ENCODE measurements at regions of chr14 and their contacts with region 1.

Region 1: DNA sequence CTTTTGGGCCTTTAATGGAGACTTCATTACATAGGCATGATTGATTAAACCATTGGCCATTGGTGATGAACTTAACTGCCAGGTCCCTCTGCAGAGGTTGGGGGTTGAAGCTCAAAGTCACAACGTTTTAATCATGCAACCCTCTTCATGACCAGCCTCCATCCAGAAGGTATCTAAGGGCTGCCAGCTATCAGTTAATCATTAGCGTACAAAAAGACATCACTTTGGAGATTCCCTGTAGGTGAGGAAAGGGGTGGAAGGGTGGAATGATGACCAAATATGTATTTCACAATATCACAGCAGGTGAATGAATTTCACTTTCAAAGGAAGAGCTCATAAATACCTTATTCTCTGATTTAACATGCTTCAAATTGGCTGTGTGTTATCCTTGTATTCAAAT is 92.0 kb downstream of the MIPOL1 start:
- DNase-seq: no peak
- ATAC-seq: no peak
- H3K4me3 ChIP-seq: no peak overlapping the region
- H3K27ac ChIP-seq: no peak overlapping the region
- H3K4me1 ChIP-seq: no peaks in the 10 kb centered on the region
- H3K27me3 ChIP-seq: no peaks in the 10 kb centered on the region
- CTCF ChIP-seq: no peak

Region 2: DNA sequence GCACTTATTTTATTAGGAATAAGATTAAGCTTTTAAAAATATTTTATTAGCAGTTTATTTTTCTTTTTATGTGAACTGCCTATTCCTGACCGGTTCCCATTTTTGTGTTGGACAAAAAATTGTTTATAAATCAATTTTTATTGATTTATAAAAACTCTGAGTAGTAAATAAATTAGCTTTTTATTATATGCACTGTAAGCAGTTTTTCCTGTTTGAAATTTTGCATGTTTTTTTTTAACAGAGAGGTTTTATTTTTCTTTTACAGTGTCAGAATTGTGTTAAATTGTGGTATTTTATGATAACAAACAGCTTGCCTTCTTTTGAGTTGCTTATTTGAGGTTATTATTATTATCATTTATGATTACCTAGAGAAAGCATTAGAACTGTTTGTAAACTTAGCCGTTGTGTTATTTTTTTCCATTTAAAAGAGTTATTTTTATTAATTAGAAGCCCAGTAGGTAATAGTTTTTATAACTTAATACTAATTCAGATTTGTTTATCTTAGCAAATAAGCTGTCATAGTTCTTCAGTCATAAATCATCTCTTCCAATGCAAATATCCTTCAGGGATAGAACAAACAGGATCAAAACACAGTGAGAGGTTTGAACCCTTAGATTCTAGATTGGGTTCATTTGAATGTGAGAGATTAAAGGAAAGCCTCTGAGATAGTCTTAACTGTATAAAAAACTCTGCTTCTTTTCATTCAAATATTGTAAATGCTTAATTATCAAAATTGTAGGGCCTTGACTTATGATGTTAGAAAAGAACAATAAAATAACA is 237.5 kb after region 1 on chr14:
- intact Hi-C with region 1: loop called in 1 of 10 experiments (anchors 10 kb)
- DNase-seq: no peak
- ATAC-seq: no peak
- H3K4me3 ChIP-seq: no peak overlapping the region
- H3K27ac ChIP-seq: no peak overlapping the region
- H3K4me1 ChIP-seq: no peaks in the 10 kb centered on the region
- H3K27me3 ChIP-seq: no peaks in the 10 kb centered on the region
- CTCF ChIP-seq: no peak